ENCODE measurements at regions of chr10 and their contacts with region 1.

Region 1: DNA sequence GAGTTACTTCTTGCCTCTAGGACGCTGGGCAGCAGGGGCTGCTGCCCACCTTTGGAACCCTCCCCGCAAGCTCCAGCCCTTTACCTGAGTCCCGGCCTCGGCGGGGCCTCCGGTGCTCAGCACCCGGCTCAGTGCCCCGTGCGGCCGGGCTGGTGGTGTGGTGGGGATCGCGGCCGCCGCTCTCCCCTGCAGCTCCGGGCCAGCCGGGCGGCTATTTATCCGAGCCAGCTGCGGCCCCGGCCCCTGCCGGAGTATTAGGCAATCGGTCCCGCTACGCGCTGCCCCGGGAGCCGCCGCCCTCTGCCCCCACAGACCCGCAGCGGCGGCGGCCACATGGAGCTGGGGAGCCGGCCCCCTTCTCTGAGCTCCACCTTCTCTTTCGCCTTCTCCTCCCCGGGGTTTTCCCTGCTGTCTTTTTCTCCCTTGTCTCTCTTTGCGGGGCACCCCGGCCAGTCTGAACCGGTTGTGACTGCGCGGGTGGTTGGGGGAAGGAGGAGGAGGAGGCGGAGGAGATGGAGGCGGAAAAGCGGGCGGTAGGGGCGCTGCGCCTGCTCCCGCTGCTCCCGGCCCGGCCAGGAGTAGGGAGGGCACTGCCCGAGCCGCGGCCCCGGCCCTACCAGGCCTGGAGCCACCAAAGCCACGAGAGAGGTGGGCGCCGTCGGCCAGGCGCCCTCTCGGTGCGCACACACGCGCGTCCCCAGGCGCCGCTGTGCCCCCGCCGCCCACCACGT is at the start of gene SLC16A9:
- DNase-seq: peak; percentile 69
- H3K4me3 ChIP-seq: peak within 1 kb of the TSS; percentile 50 to 93 (median 63)
- H3K27ac ChIP-seq: peak within 1 kb of the TSS; percentile 17 to 67 (median 64)
- H3K4me1 ChIP-seq: peaks cover 0 to 19% (median 13%) of the 10 kb centered on the region in 4 donors
- H3K27me3 ChIP-seq: peaks cover 23% of the 10 kb centered on the region
- CTCF ChIP-seq: peak; percentile 28 to 40 (median 32)
- EP300 ChIP-seq: no peak
- POLR2A ChIP-seq: peak; percentile 43
- total RNA-seq, gene SLC16A9: 0.80 to 58.7 (median 15.3) TPM

Region 2: DNA sequence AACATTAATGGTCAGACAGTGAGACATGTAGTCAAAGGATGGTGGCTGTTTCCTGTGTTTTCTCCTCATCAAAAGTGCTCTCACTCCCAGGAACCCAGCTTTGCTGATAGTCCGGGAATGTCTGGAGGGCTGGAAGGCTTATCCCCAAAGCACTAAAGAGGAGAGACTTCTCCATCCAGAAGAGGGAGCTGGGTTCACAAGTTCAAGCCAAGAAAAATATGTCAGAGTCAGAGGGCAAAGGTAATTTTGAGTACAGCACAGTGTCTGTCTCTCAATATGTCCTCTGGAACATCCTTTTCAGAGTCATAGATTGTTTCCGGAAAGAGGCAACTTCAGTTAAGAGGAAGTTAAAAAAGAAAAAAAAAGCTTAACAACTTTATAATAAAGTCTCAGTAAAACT is 814.6 kb before region 1 on chr10:
- in situ Hi-C with region 1: no loop called
- intact Hi-C with region 1: loop called (anchors 5 kb)
- DNase-seq: no peak
- H3K4me3 ChIP-seq: no peak overlapping the region
- H3K27ac ChIP-seq: no peak overlapping the region
- H3K4me1 ChIP-seq: peaks cover 0 to 20% (median 10%) of the 10 kb centered on the region in 4 donors
- H3K27me3 ChIP-seq: no peaks in the 10 kb centered on the region
- CTCF ChIP-seq: no peak
- EP300 ChIP-seq: no peak
- POLR2A ChIP-seq: no peak

Region 3: GRCh38 chr10:59657724-59658123 is 51.8 kb before region 1 on chr10:
- in situ Hi-C with region 1: no loop called
- intact Hi-C with region 1: no loop called
- DNase-seq: no peak
- H3K4me3 ChIP-seq: no peak overlapping the region
- H3K27ac ChIP-seq: no peak overlapping the region
- H3K4me1 ChIP-seq: no peaks in the 10 kb centered on the region
- H3K27me3 ChIP-seq: no peaks in the 10 kb centered on the region
- CTCF ChIP-seq: no peak
- EP300 ChIP-seq: no peak
- POLR2A ChIP-seq: no peak

Region 4: DNA sequence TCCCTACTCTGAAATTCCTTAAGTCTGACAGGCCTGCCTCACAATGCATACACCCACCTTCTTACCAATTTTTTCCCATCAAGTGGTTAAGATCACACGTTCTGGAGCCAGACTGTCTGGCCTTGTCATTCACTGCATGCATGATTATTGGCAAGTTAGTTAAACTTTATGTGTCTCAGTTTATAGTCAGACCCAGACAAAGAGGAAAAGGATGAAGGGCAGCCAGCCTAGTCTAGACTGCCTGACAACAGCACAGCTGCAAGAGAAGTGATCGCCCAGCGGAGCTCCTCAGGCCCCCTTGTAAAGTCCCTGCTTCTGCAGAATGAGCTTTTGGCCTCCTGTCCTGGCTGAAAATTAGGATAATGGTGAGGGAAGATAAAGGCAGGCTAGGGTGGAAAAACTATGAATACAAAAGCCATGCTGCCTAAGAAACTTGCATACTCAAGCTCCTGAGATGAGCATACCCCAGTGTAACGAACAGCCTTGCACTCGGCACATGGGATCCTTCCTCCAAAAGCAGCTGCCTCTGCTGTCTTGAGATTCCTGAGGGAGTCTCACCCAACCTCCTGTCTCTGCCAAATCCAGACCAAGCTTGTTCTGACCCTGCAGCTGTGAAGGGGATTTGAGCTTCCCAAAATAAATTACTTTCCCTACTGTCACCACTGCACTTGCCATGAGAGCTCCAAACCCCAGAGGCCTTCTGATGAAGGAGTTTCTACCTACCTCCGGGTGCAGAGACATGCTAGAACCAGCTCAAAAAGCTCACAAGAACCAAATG is 70.4 kb after region 1 on chr10:
- in situ Hi-C with region 1: no loop called
- intact Hi-C with region 1: no loop called
- DNase-seq: no peak
- H3K4me3 ChIP-seq: no peak overlapping the region
- H3K27ac ChIP-seq: no peak overlapping the region
- H3K4me1 ChIP-seq: no peaks in the 10 kb centered on the region
- H3K27me3 ChIP-seq: no peaks in the 10 kb centered on the region
- CTCF ChIP-seq: no peak
- EP300 ChIP-seq: no peak
- POLR2A ChIP-seq: no peak

Region 5: DNA sequence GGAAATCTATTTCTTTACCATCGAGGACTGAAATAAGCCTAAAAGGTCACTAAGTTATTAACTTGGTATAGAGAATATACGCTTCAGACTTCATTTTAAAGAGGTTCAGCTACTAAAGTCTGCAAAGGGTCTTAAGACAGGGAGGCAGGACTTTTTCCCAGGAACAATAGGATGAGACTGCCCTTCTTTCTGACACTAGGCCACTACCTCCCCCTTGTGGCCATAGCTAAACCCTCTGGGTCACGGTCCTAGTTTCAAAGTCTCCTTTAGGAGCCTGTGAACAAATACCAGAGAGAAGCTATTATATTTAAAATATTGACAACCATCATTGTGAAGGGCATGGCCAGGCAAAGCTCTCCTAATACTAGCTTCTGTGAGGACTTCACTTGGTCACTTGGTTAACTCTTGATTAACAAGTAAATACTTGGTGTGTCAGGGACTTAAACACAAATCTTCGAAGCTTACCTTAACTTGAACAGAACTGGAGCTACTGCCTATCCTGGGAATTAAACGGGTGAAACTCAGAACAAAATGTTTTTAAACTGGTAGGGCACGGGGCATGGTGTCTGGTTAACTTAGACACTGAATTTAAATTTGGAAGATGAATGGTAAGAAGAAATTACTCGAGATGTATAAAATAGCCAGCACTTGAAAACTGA is 121.2 kb after region 1 on chr10:
- in situ Hi-C with region 1: no loop called
- intact Hi-C with region 1: no loop called
- DNase-seq: peak; percentile 46
- H3K4me3 ChIP-seq: no peak overlapping the region
- H3K27ac ChIP-seq: no peak overlapping the region
- H3K4me1 ChIP-seq: peaks cover 4 to 23% (median 14%) of the 10 kb centered on the region in 4 donors
- H3K27me3 ChIP-seq: no peaks in the 10 kb centered on the region
- CTCF ChIP-seq: peak; percentile 46 to 79 (median 75)
- EP300 ChIP-seq: no peak
- POLR2A ChIP-seq: no peak

Region 6: DNA sequence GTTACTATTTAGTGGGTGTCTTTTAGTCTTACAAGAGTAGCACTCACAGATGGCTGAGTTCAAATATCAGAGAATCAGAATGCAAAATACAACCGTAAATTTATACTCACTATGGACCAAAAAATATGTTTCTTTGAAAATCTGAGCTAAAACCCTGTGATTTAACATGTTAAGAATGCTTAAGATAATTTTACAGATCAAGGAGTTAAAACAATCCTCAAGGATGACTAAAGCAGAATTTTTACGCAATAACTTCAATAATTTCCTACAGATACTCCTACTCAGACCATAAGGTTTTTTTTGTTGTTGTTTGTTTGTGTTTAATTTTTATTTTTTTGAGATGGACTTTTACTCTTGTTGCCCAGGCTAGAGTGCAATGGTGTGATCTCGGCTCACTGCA is 244.7 kb after region 1 on chr10:
- in situ Hi-C with region 1: no loop called
- intact Hi-C with region 1: no loop called
- DNase-seq: no peak
- H3K4me3 ChIP-seq: no peak overlapping the region
- H3K27ac ChIP-seq: no peak overlapping the region
- H3K4me1 ChIP-seq: no peaks in the 10 kb centered on the region
- H3K27me3 ChIP-seq: no peaks in the 10 kb centered on the region
- CTCF ChIP-seq: no peak
- EP300 ChIP-seq: no peak
- POLR2A ChIP-seq: no peak